Colonic mucosa (tissue), 4 donors: ENCODE measurements at regions of chr10 and their contacts with region 1.

Region 1: DNA sequence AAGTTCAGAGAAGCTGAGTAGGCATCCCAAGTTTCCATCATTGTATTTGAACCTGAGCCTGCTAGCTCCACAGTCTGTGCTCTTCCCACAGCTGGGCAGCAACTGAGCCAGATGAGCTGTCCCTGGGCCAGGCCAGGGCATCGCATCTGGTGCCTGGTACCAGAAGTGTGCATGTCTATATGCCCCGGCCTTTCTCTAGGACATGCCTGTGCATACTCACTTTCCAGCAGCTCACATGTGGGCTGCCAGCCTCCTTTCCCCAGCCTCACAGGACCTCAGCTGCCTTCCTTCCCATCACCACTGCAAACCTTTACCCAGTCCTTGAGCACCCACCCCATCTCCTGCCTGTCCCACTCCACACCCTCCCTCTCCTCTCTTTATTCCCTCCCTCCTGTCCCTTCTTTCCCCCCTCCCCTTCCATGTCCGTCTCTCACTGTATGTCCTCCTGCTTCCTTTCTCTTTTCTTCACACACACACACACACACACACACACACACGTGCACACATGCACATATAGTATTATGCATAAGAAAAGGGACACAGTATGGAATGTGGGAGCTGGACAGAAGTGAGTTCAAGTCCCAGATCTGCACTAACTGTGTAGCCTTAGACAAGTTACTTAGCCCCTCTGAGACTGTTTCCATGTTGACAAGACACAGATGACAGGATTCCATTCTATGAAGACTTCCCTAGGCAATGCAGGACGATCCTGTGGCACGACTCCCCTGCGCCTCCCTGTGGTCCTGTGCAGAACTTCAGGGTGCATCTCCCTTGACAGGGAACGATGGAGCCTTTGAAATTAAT is 10.9 kb downstream of the CDHR1 start:
- DNase-seq: peak; percentile 80
- H3K4me3 ChIP-seq: no peak overlapping the region
- H3K27ac ChIP-seq: no peak overlapping the region
- H3K4me1 ChIP-seq: peaks cover 12% of the 10 kb centered on the region
- H3K27me3 ChIP-seq: no peaks in the 10 kb centered on the region
- CTCF ChIP-seq: peak; percentile 82

Region 2: DNA sequence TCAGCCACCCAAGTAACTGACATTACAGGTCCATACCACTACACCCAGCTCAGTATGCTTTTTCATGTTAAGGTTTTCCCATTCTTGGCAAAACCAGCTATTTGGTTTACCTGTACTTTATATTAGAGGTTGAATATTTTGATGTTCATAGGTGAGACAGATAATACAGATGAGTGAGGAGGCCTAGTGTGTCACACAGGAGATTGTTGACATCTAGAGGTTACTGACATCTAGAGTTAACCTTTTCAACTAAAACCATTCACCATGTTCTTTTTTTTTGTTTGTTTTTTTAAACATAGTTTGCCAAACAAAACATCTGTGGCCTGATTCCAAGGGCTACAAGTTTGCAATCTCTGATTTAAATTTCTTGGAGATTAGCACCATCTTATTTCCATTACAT is 57.9 kb before region 1 on chr10:
- intact Hi-C with region 1: loop called (anchors 2 kb)
- DNase-seq: no peak
- H3K4me3 ChIP-seq: no peak overlapping the region
- H3K27ac ChIP-seq: no peak overlapping the region
- H3K4me1 ChIP-seq: no peaks in the 10 kb centered on the region
- H3K27me3 ChIP-seq: no peaks in the 10 kb centered on the region
- CTCF ChIP-seq: no peak

Region 3: DNA sequence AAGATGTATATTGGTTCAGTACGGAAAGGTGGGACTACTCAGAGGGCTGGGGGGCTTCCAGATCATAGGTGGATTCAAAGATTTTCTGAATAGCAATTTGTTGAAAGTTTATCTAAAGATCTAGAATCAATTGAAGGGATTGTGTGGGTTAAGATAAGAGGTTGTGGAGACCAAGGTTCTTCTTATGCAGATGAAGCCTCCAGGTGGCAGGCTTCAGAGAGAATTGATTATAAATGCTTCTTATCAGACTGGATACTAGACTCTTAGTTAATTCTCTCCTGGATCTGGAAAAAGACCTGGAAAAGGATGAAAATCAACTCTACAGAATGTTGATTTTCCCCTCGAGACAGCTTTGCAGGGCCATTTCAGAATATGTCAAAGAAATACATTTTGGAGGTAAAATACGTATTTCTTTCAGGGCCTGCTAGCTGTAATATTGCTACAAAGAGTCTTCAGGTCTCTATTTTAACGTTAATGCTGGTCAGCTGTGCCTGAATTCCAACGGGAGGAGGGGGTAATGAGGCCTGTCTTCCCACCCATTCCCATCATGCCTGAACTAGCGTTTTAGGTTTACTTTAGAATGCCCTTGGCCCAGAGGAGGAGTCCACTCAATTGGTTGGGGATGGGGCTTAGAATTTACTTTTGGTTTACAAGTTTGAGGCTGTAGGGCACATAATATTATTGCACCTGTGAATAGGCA is 44.4 kb before region 1 on chr10:
- intact Hi-C with region 1: loop called (anchors 5 kb)
- DNase-seq: no peak
- H3K4me3 ChIP-seq: no peak overlapping the region
- H3K27ac ChIP-seq: no peak overlapping the region
- H3K4me1 ChIP-seq: no peaks in the 10 kb centered on the region
- H3K27me3 ChIP-seq: no peaks in the 10 kb centered on the region
- CTCF ChIP-seq: no peak

Region 4: GRCh38 chr10:84375011-84375410 is 169.8 kb after region 1 on chr10:
- intact Hi-C with region 1: no loop called
- DNase-seq: peak; percentile 57
- H3K4me3 ChIP-seq: no peak overlapping the region
- H3K27ac ChIP-seq: no peak overlapping the region
- H3K4me1 ChIP-seq: no peaks in the 10 kb centered on the region
- H3K27me3 ChIP-seq: no peaks in the 10 kb centered on the region
- CTCF ChIP-seq: peak; percentile 59